ENCODE measurements at regions of chr19 and their contacts with region 1.

Region 1: GRCh38 chr19:47608074-47608918 is 638 bp upstream of the BICRA start:
- DNase-seq: peak; percentile 95 to 97
- ATAC-seq: peak; percentile 94 to 96 (median 96)
- H3K4me3 ChIP-seq: peak overlapping the region; percentile 80 to 100 (median 96)
- H3K27ac ChIP-seq: peak overlapping the region; percentile 92 to 100 (median 98)
- H3K4me1 ChIP-seq: peaks cover 18 to 44% (median 39%) of the 10 kb centered on the region in 9 donors
- H3K27me3 ChIP-seq: no peaks in the 10 kb centered on the region
- CTCF ChIP-seq: peak in 5 of 9 donors; percentile 14 to 46 (median 42)

Region 2: DNA sequence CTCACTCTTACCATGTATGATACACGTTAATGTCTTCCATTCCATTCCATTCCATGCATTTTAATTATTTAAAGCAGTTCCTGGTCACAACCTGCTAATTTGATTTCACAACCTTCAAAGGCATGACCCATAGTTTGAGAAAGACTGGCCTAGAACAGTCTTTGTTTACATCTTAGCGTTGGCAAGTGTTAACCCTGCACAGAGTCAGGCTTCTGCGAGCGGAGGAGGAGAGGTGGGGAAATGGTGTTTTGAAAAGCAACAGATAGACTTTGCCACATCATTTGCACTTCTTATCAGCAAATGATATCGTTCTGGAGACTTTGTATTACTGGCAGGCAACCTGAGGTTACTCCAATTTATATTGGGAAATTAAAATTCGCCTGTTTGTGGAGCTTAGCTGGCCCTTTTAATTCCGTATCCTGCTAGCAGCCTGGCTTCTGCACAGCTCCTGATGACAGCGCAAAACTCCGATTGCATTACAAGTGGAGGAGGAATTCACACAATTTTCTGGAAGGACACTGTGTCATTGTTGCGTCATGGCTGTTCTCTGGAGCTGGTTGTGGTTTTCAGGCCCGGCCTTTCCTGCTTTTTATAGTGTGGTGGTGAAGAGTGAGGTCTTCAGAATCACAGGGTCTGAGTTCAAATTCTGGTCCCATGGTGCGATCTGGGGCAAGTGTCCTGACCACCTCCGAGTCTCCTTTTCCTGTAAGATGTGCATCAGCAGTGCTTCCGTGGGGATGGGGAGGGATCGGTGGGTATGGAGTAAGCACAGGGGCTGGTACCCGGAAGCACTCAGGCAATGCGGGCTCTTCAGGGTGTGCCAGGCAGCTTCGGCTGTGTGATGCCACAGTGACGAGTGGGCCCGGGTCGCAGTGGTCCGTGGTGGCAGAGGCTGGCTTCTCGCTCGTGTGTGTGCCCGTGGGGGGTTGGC is 55.8 kb after region 1 on chr19:
- intact Hi-C with region 1: loop called in 7 of 10 experiments (anchors 5 to 10 kb)
- DNase-seq: peak in 1 of 2 donors; percentile 79
- ATAC-seq: peak; percentile 80 to 88 (median 83)
- H3K4me3 ChIP-seq: no peak overlapping the region
- H3K27ac ChIP-seq: peak overlapping the region; percentile 67 to 95 (median 89)
- H3K4me1 ChIP-seq: peaks cover 8 to 89% (median 60%) of the 10 kb centered on the region in 9 donors
- H3K27me3 ChIP-seq: no peaks in the 10 kb centered on the region
- CTCF ChIP-seq: no peak

Region 3: DNA sequence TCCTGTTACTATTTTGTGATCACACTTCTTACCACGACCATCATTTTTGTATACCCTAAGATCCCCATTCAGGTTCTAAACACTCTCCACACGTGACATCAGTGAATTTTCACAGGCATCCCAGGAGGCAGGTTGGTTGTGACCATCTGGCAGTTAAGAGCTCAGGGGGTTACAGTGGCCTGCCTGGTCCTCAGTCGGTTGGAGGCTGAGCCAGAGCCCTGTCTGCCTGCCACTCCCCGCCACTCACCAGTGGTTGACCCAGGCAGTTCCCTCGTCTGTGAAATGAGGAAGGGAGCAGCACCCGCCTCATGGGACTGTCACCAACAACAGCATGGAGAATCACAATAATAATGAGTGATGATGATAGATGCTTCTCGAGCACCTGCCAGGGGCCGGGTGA is 68.5 kb after region 1 on chr19:
- intact Hi-C with region 1: loop called in 1 of 10 experiments (anchors 10 kb)
- DNase-seq: no peak
- ATAC-seq: no peak
- H3K4me3 ChIP-seq: no peak overlapping the region
- H3K27ac ChIP-seq: no peak overlapping the region
- H3K4me1 ChIP-seq: no peaks in the 10 kb centered on the region
- H3K27me3 ChIP-seq: no peaks in the 10 kb centered on the region
- CTCF ChIP-seq: no peak

Region 4: GRCh38 chr19:47697863-47698609 is 89.7 kb after region 1 on chr19:
- intact Hi-C with region 1: loop called in 4 of 10 experiments (anchors 2 to 10 kb)
- DNase-seq: peak; percentile 73 to 75
- ATAC-seq: peak; percentile 79 to 90 (median 84)
- H3K4me3 ChIP-seq: no peak overlapping the region
- H3K27ac ChIP-seq: peak overlapping the region in 7 of 10 donors; percentile 25 to 73 (median 66)
- H3K4me1 ChIP-seq: peaks cover 0 to 10% (median 6%) of the 10 kb centered on the region in 9 donors
- H3K27me3 ChIP-seq: no peaks in the 10 kb centered on the region
- CTCF ChIP-seq: peak; percentile 91 to 99 (median 96)

Region 5: DNA sequence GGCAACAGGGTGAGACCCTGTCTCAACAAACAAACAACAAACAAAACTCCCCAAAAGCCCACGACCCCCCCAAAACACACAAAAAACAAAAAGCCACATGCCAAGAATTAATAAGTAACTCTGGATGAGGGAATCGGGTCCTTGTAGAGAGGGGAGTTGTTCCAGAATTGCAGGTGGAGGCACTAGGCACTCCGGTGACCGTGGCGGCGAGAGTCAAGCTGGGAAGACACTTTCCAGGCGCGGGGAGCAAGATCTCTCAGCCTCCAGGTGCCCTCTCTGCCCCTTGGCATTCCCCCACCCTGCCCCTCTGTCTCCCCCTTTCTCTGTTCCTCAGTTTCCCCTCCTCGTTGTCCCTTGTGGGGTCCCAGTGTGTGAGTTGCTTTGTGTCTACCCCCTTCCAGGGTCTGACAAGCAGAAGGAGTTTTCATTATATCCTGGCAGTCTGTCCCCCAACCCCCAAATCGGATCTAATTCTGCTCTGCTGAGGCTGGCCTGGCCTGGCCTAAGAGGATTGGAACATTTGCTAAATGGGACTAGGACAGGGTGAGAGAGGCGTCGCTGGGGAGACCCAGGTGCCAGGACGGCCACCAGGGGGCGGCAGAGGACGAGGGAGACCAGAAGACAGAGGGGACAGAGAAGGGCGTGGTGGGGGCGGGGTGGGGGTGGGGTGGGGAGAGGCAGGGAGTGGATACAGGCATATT is 205.2 kb after region 1 on chr19:
- intact Hi-C with region 1: no loop called
- DNase-seq: peak; percentile 65 to 77
- ATAC-seq: peak; percentile 51 to 86 (median 74)
- H3K4me3 ChIP-seq: no peak overlapping the region
- H3K27ac ChIP-seq: no peak overlapping the region
- H3K4me1 ChIP-seq: no peaks in the 10 kb centered on the region
- H3K27me3 ChIP-seq: peaks cover 0 to 15% (median 4%) of the 10 kb centered on the region in 7 donors
- CTCF ChIP-seq: peak; percentile 31 to 61 (median 56)

Measured in heart right ventricle (tissue), 16 donors.